G401 (cell line): ENCODE measurements at regions of chr20 and their contacts with region 1.

Region 1: GRCh38 chr20:46151936-46152335 is 33.8 kb downstream of the CD40 start:
- DNase-seq: no peak

Region 2: GRCh38 chr20:46220455-46221204 is 68.7 kb after region 1 on chr20:
- in situ Hi-C with region 1: loop called (anchors 5 kb)
- DNase-seq: peak; percentile 82